Adrenal gland (tissue), 19 donors: ENCODE measurements at regions of chr6 and their contacts with region 1.

Region 1: GRCh38 chr6:70310063-70310694 is 7.3 kb upstream of the COL9A1 start:
- DNase-seq: peak in 2 of 7 donors; percentile 10 to 27
- H3K4me3 ChIP-seq: no peak overlapping the region
- H3K27ac ChIP-seq: no peak overlapping the region
- H3K4me1 ChIP-seq: no peaks in the 10 kb centered on the region
- H3K27me3 ChIP-seq: no peaks in the 10 kb centered on the region
- CTCF ChIP-seq: peak; percentile 33 to 73 (median 68)
- POLR2A ChIP-seq: no peak

Region 2: GRCh38 chr6:70369332-70369950 is 59.3 kb after region 1 on chr6:
- intact Hi-C with region 1: loop called (anchors 5 kb)
- DNase-seq: peak; percentile 43 to 78 (median 69)
- H3K4me3 ChIP-seq: no peak overlapping the region
- H3K27ac ChIP-seq: no peak overlapping the region
- H3K4me1 ChIP-seq: no peaks in the 10 kb centered on the region
- H3K27me3 ChIP-seq: no peaks in the 10 kb centered on the region
- CTCF ChIP-seq: peak; percentile 74 to 94 (median 86)
- POLR2A ChIP-seq: no peak

Region 3: DNA sequence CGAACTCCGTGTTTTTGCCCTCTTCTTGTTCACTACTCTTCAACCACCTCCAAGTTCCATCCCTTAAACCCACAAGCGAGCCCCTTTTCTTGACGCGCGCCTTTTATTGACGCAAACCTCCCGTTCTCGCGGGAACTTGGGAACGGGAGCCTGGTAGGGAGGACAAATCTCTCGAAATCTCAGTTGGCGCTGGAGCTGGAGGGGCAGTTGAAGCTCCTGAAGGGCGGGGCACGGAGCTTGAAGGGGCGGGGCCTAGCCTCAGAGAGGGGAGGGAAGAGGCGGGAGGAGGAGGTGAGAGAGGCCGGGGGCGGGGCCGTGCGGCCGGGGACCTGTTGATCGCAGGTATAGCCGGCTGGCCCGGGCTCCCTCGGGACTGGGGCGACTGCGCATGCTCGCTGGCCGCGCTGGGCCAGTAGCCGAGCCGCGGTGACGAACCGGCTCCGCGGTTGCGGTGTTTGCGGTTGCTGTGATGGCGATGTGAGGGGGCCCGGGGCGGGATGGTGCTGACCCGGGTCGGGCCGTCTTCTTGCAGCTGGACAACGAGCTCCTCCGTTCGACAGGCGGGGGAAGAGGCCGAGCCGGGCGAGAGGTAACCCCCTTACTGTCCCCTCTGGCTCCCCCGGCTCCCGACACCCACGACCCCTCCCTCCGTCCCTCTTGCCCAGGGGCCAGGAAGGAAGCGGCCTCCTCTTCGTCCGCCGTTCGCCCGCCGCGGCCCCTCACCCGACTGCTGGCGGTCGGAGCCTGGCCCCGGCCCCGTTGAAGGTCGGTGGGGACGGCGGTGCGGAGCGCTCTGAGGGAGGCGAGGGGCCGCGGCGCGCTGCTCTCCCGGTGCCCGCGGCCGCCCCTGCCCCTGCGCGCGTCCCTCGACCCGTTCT is 103.2 kb after region 1 on chr6 and contains the start of gene FAM135A:
- intact Hi-C with region 1: no loop called
- DNase-seq: peak; percentile 99
- H3K4me3 ChIP-seq: peak within 1 kb of the TSS; percentile 65 to 87 (median 70)
- H3K27ac ChIP-seq: peak within 1 kb of the TSS in 4 of 5 donors; percentile 70 to 81 (median 76)
- H3K4me1 ChIP-seq: peaks cover 0 to 28% of the 10 kb centered on the region in 2 donors
- H3K27me3 ChIP-seq: no peaks in the 10 kb centered on the region
- CTCF ChIP-seq: no peak
- POLR2A ChIP-seq: peak; percentile 49 to 74
- total RNA-seq, gene FAM135A: 10.3 to 33.9 (median 15.3) TPM